ENCODE measurements at regions of chr15 and their contacts with region 1.

Region 1: GRCh38 chr15:48861813-48862431 is 16.0 kb upstream of the EID1 start:
- DNase-seq: peak; percentile 64
- ATAC-seq: peak; percentile 61
- H3K4me3 Mint-ChIP-seq: no peak overlapping the region
- H3K27ac Mint-ChIP-seq: no peak overlapping the region
- H3K4me1 Mint-ChIP-seq: peaks cover 17% of the 10 kb centered on the region
- H3K27me3 Mint-ChIP-seq: peaks cover 20% of the 10 kb centered on the region

Region 2: GRCh38 chr15:48925714-48926223 is 63.8 kb after region 1 on chr15:
- CTCF ChIA-PET with region 1: interaction called, 10 read pairs
- POLR2A ChIA-PET with region 1: no interaction called
- DNase-seq: no peak
- ATAC-seq: peak; percentile 67
- H3K4me3 Mint-ChIP-seq: no peak overlapping the region
- H3K27ac Mint-ChIP-seq: no peak overlapping the region
- H3K4me1 Mint-ChIP-seq: peaks cover 32% of the 10 kb centered on the region
- H3K27me3 Mint-ChIP-seq: no peaks in the 10 kb centered on the region

Region 3: DNA sequence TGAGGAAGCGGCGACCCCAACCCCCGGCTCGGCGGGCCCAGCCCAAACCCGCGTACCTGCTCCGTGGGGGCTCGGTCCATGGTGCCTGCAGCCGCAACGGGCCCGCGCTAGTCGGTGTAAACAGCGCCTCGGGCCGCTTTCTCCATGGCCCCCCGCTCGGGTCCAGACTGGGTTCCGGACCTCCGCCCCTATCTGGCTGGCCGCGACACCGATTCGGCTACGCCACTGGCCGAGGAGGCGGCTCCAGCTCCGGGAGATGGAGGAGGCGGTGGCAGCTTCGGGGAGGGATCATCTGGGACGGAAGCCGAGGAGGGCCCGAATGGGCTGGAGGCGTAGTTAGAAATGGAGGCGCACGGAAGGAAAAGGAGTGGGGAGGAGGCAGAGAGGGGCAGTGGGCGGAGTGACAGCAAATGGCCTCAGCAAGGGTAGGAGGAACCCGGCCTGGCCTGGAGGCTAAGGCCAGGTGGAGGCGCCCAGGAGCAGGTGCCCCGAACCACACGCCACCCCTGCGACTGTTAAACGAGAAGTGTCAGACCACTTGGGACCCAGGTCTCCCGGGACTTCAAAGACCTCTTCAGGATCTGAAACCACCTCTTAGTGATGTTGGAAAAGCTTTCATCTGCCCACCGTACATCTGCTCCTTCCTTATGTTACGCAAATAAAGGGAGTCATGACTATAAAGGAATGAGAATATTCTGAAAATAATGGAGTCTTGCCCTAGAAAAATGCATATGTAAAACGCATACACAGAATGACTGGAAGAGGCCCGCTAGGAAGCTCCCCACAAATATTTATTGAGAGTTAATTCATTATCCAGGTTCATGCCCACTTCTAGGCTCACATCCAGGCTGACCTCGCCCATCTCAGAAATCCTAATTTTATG is 184.5 kb after region 1 on chr15 and contains the start of gene SECISBP2L:
- CTCF ChIA-PET with region 1: interaction called, 10 read pairs
- POLR2A ChIA-PET with region 1: no interaction called
- DNase-seq: peak; percentile 94
- ATAC-seq: peak; percentile 95
- H3K4me3 Mint-ChIP-seq: peak within 1 kb of the TSS; percentile 94
- H3K27ac Mint-ChIP-seq: peak within 1 kb of the TSS; percentile 86
- H3K4me1 Mint-ChIP-seq: peaks cover 22% of the 10 kb centered on the region
- H3K27me3 Mint-ChIP-seq: no peaks in the 10 kb centered on the region
- total RNA-seq, gene SECISBP2L: 28.3 to 29.2 TPM

Region 4: DNA sequence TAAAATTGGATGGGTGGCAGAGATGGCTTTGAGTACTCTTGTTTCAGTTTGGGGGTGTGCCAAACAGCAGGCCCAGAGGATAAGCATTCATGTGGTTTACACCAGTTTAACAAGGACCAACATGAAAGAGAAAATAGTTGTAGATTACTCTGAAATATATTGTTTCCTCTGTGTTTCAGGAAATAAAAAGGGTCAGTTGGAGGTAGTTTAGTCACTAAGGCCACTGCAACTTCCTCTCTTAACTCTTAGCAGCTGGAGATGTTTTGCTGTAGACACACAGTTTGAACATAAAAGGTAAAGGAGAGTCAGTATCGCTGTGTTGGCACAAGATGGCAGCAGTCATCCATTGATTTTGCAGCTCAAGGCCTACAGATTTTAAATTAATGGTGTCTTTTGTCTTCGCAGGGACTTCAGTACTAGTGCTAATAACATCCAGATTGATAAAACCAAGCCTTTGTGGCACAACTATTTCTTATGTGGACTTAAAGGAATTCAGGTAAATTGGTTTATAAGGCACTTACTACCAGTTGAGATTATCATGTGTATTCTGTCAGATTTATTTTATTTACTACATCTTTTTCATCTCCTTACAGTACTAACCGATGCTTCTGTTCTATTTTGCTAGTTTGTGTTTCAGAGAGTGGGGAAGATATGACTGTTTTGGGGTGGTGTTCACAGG is 373.7 kb after region 1 on chr15:
- CTCF ChIA-PET with region 1: interaction called, 15 read pairs
- POLR2A ChIA-PET with region 1: no interaction called
- DNase-seq: peak; percentile 75
- ATAC-seq: peak; percentile 86
- H3K4me3 Mint-ChIP-seq: no peak overlapping the region
- H3K27ac Mint-ChIP-seq: peak overlapping the region; percentile 72
- H3K4me1 Mint-ChIP-seq: peaks cover 16% of the 10 kb centered on the region
- H3K27me3 Mint-ChIP-seq: no peaks in the 10 kb centered on the region